MCF 10A (cell line): ENCODE measurements at regions of chr4 and their contacts with region 1.

Region 1: GRCh38 chr4:48546336-48546735 is 56.3 kb downstream of the ZAR1 start:
- DNase-seq: peak; percentile 55
- H3K4me3 Mint-ChIP-seq: no peak overlapping the region
- H3K27ac Mint-ChIP-seq: no peak overlapping the region
- H3K4me1 Mint-ChIP-seq: no peaks in the 10 kb centered on the region
- H3K27me3 Mint-ChIP-seq: no peaks in the 10 kb centered on the region
- CTCF ChIP-seq: peak; percentile 74

Region 2: DNA sequence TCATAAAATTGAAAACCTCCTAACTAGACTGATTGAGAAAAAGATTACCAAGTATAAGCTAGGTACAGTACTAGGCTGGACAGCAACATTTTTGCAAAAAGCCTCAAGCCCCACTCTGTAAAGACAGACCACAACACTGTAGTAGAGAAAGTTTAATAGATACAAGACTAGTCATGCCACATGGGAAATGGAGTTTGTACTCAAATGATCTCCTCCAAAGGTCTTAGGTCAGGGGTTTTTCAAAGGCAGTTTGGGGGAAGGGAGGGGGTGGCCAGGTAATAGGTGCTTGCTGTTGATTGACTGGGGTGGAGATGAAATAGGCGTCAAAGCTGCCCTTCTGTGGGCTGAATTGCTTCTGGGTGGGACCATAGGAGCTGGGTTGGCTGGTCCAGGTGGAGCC is 544.1 kb before region 1 on chr4:
- CTCF ChIA-PET with region 1: no interaction called
- POLR2A ChIA-PET with region 1: no interaction called
- intact Hi-C with region 1: loop called (anchors 5 kb)
- DNase-seq: no peak
- H3K4me3 Mint-ChIP-seq: no peak overlapping the region
- H3K27ac Mint-ChIP-seq: no peak overlapping the region
- H3K4me1 Mint-ChIP-seq: no peaks in the 10 kb centered on the region
- H3K27me3 Mint-ChIP-seq: no peaks in the 10 kb centered on the region
- CTCF ChIP-seq: no peak

Region 3: GRCh38 chr4:48127682-48128394 is 418.5 kb before region 1 on chr4:
- CTCF ChIA-PET with region 1: interaction called, 5 read pairs
- POLR2A ChIA-PET with region 1: no interaction called
- intact Hi-C with region 1: loop called (anchors 5 kb)
- DNase-seq: peak; percentile 83
- H3K4me3 Mint-ChIP-seq: peak overlapping the region; percentile 70
- H3K27ac Mint-ChIP-seq: peak overlapping the region; percentile 57
- H3K4me1 Mint-ChIP-seq: peaks cover 9% of the 10 kb centered on the region
- H3K27me3 Mint-ChIP-seq: no peaks in the 10 kb centered on the region
- CTCF ChIP-seq: peak; percentile 52

Region 4: DNA sequence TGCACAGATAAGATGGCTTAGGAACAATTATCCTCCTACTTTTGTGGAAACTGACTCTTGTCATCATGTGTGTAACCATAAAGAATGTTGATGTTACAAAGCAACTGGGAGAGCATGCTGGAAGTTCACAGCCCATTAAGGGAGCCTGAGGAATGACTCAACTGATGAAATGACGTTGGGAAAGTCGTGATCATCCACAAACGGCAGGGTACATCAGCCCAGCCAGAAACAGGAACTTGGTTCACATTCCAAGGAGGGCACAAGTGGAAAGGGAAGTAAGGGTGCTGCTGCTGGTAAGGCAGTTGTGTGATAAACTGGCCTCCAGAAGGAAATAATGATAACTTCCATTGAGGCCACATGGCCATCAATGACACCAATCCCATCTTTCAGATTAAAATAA is 283.4 kb before region 1 on chr4:
- CTCF ChIA-PET with region 1: no interaction called
- POLR2A ChIA-PET with region 1: no interaction called
- intact Hi-C with region 1: no loop called
- DNase-seq: no peak
- H3K4me3 Mint-ChIP-seq: no peak overlapping the region
- H3K27ac Mint-ChIP-seq: no peak overlapping the region
- H3K4me1 Mint-ChIP-seq: no peaks in the 10 kb centered on the region
- H3K27me3 Mint-ChIP-seq: no peaks in the 10 kb centered on the region
- CTCF ChIP-seq: no peak

Region 5: DNA sequence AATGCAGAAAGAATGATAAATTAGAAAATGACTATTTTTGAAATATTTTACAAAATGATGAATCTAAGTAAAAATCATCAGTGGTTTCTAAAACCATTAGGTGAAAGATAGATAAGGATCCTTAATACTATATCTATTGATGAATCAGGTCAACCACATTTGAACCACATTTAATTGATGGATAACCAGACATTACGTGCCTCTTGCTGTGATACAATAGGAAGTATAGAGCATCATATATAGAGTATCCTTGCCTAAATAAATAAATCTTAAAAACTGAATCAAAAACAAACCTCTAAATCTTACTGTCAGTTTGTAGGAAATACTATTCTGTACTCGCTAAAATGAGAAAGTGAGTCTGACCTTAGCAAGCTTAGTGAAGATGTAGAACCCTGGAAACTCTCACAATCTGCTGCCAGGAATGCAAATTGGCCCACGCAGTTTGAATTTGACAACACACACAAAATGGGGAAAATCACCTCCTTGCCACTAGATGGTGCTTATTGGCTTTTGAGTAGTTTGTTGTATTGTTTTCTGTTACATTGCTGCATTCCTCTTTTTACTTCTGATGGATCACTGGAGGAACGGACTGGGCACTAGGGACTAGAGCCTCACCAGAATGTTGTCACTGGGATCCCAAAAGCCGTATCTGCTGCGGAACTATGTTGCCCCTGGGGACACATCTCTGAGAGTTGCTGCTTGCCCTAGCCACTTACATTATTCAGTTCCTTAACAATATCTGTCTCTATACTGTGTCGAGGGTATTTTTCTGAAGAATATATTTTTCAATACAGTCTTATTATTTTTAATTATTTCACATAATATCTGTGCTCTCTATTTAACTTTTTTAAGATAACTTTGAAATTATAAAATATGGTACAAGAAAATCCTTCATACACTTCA is 230.4 kb before region 1 on chr4:
- CTCF ChIA-PET with region 1: interaction called, 9 read pairs
- POLR2A ChIA-PET with region 1: no interaction called
- intact Hi-C with region 1: loop called (anchors 1 kb)
- DNase-seq: peak; percentile 79
- H3K4me3 Mint-ChIP-seq: no peak overlapping the region
- H3K27ac Mint-ChIP-seq: no peak overlapping the region
- H3K4me1 Mint-ChIP-seq: no peaks in the 10 kb centered on the region
- H3K27me3 Mint-ChIP-seq: no peaks in the 10 kb centered on the region
- CTCF ChIP-seq: peak; percentile 73

Region 6: GRCh38 chr4:48445704-48446103 is 100.6 kb before region 1 on chr4:
- CTCF ChIA-PET with region 1: interaction called, 17 read pairs
- POLR2A ChIA-PET with region 1: no interaction called
- intact Hi-C with region 1: loop called (anchors 2 kb)
- DNase-seq: peak; percentile 17
- H3K4me3 Mint-ChIP-seq: no peak overlapping the region
- H3K27ac Mint-ChIP-seq: no peak overlapping the region
- H3K4me1 Mint-ChIP-seq: no peaks in the 10 kb centered on the region
- H3K27me3 Mint-ChIP-seq: no peaks in the 10 kb centered on the region
- CTCF ChIP-seq: peak; percentile 50

Region 7: GRCh38 chr4:48499551-48500066 is 46.7 kb before region 1 on chr4:
- CTCF ChIA-PET with region 1: no interaction called
- POLR2A ChIA-PET with region 1: no interaction called
- intact Hi-C with region 1: no loop called
- DNase-seq: no peak
- H3K4me3 Mint-ChIP-seq: no peak overlapping the region
- H3K27ac Mint-ChIP-seq: no peak overlapping the region
- H3K4me1 Mint-ChIP-seq: no peaks in the 10 kb centered on the region
- H3K27me3 Mint-ChIP-seq: no peaks in the 10 kb centered on the region
- CTCF ChIP-seq: no peak